Pancreas (tissue), 10 donors: ENCODE measurements at regions of chr18 and their contacts with region 1.

Region 1: GRCh38 chr18:58080451-58080850 is 36.4 kb downstream of the NEDD4L start:
- DNase-seq: no peak
- ATAC-seq: peak in 1 of 4 donors; percentile 27
- H3K4me3 ChIP-seq: no peak overlapping the region
- H3K27ac ChIP-seq: peak overlapping the region in 1 of 4 donors; percentile 6
- H3K4me1 ChIP-seq: peaks cover 2 to 13% (median 8%) of the 10 kb centered on the region in 3 donors
- H3K27me3 ChIP-seq: no peaks in the 10 kb centered on the region
- CTCF ChIP-seq: no peak

Region 2: DNA sequence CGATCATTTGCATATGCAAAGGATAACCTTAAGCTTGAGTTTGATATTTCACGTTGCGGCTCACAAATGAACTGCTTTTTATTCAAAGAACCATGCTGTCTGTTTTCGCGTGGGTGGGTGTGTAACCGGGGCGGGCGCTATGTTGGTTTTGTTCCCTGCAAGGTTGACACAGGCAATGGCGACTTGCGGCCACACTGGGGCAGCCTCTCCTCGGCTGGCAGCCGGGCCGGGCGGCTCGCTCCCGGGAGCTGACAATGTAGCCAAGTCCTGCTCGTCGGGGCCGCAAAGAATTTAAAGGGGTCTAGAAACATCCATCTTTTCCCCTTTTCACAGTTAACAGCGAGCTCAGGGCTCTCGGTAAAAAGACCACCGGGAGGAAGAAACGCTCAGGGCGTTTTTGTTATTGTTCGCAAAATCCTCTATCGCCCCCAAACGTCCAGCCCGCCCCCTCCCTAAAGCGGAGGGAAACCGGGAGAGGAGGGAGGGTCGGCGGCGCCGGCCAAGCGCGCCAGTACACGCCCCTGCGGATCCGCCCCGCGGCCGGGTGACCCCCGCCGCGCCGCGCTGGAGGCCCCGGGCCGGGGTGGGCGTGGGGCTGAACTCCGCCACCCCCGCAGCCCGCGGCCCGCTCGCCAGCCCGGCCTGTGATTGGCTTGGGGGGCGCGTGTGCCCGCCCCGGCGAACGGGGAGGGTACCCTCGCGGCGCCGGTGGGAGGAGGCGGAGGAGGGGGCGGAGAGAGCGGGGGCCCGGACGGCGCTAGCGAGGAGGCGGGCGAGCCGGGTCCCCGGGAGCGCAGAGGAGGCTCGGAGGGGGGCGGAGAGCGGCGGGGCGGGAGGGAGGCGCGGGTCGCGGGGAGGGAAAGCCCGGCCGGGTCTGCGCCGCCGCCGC is 36.7 kb before region 1 on chr18 and contains the start of gene NEDD4L:
- intact Hi-C with region 1: loop called in 1 of 3 experiments (anchors 5 kb)
- DNase-seq: peak; percentile 83 to 94 (median 89)
- ATAC-seq: peak; percentile 69 to 85 (median 77)
- H3K4me3 ChIP-seq: peak within 1 kb of the TSS; percentile 79 to 99 (median 95)
- H3K27ac ChIP-seq: peak within 1 kb of the TSS; percentile 89 to 95 (median 94)
- H3K4me1 ChIP-seq: peaks cover 13 to 16% (median 13%) of the 10 kb centered on the region in 3 donors
- H3K27me3 ChIP-seq: no peaks in the 10 kb centered on the region
- CTCF ChIP-seq: peak; percentile 70 to 85 (median 81)
- total RNA-seq, gene NEDD4L: 57.7 to 113 (median 72.3) TPM